ENCODE measurements at regions of chr7 and their contacts with region 1.

Region 1: GRCh38 chr7:151304856-151305255 is 36.8 kb upstream of the NUB1 start:
- DNase-seq: no peak
- ATAC-seq: no peak

Region 2: GRCh38 chr7:149598721-149599306 is 1706.0 kb before region 1 on chr7:
- intact Hi-C with region 1: loop called (anchors 10 kb)
- DNase-seq: no peak
- ATAC-seq: no peak

Region 3: DNA sequence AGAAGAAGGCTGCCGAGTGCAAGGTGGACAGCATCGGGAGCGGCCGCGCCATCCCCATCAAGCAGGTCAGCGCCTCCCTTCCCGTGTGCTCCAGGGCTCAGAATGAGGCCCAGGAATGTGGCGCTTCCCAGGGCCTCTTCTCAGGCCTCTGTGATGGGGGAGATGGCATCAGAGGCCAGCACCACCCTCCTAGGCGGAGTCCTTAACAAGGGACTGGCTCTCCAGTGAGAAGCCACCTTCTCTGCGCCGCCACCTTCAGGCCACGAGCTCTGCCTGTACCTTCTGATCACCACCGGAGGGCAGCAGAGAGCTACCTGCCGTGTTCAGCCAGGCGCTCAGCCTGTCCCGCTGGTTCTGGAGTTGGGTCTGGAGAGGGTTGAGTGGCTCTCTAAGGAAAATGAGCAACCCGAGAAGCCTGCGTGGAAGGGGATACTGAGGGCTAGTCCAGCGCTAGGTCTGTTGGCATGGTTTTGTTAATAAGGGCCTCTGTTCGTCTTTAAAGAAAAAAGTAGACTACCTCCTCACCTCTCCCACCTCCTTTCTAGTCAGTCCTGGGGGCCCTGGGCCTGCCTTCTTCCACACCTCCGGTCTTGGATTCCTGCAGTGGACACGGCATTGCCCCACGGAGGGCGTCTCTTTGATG is 180.9 kb before region 1 on chr7:
- intact Hi-C with region 1: loop called (anchors 5 kb)
- DNase-seq: peak; percentile 91
- ATAC-seq: peak; percentile 88

Region 4: GRCh38 chr7:151244196-151244840 is 60.5 kb before region 1 on chr7:
- intact Hi-C with region 1: loop called (anchors 2 kb)
- DNase-seq: no peak
- ATAC-seq: no peak

Region 5: GRCh38 chr7:151336027-151336708 is 31.3 kb after region 1 on chr7:
- intact Hi-C with region 1: no loop called
- DNase-seq: no peak
- ATAC-seq: no peak

Measured in sciatic nerve (tissue), 2 donors.